ENCODE measurements at regions of chr9 and their contacts with region 1.

Region 1: GRCh38 chr9:36298586-36298985 is 40.3 kb upstream of the GNE start:
- DNase-seq: no peak
- H3K4me3 ChIP-seq: no peak overlapping the region
- H3K27ac ChIP-seq: peak overlapping the region; percentile 97
- H3K4me1 ChIP-seq: peaks cover 52% of the 10 kb centered on the region
- H3K27me3 ChIP-seq: no peaks in the 10 kb centered on the region
- CTCF ChIP-seq: no peak

Region 2: GRCh38 chr9:36317764-36318163 is 19.2 kb after region 1 on chr9:
- CTCF ChIA-PET with region 1: no interaction called
- POLR2A ChIA-PET with region 1: interaction called, 3 read pairs
- intact Hi-C with region 1: loop called (anchors 1 kb)
- DNase-seq: peak; percentile 89 to 96
- H3K4me3 ChIP-seq: no peak overlapping the region
- H3K27ac ChIP-seq: peak overlapping the region; percentile 95
- H3K4me1 ChIP-seq: peaks cover 61% of the 10 kb centered on the region
- H3K27me3 ChIP-seq: no peaks in the 10 kb centered on the region
- CTCF ChIP-seq: no peak

Region 3: DNA sequence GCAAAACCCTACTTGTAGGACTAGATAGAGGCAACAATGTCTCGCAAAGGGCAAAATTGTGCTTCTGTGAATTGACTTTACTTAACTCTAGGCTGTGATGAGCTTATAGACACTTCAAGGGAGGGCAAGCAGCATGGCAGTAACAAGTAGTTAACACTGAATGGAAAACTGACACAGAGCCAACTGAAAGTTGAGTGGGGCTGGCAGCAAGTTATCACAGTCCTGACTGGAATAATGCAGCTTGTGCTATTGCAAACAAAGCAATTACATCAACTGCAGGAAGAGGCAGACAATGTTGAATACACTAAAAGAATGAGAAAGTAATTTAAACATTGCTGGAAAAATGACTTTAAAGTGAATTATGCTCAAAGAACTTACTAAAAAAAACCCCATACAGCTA is 39.3 kb after region 1 on chr9:
- CTCF ChIA-PET with region 1: no interaction called
- POLR2A ChIA-PET with region 1: no interaction called
- intact Hi-C with region 1: no loop called
- DNase-seq: no peak
- H3K4me3 ChIP-seq: no peak overlapping the region
- H3K27ac ChIP-seq: no peak overlapping the region
- H3K4me1 ChIP-seq: no peaks in the 10 kb centered on the region
- H3K27me3 ChIP-seq: no peaks in the 10 kb centered on the region
- CTCF ChIP-seq: no peak